ENCODE measurements at regions of chr9 and their contacts with region 1.

Region 1: GRCh38 chr9:19230356-19231125 is at the start of gene DENND4C:
- H3K4me3 ChIP-seq: peak within 1 kb of the TSS; percentile 92
- H3K27ac ChIP-seq: peak within 1 kb of the TSS; percentile 96
- H3K4me1 ChIP-seq: peaks cover 9% of the 10 kb centered on the region; the same call in 1 of the 2 replicates
- CTCF ChIP-seq: no peak

Region 2: DNA sequence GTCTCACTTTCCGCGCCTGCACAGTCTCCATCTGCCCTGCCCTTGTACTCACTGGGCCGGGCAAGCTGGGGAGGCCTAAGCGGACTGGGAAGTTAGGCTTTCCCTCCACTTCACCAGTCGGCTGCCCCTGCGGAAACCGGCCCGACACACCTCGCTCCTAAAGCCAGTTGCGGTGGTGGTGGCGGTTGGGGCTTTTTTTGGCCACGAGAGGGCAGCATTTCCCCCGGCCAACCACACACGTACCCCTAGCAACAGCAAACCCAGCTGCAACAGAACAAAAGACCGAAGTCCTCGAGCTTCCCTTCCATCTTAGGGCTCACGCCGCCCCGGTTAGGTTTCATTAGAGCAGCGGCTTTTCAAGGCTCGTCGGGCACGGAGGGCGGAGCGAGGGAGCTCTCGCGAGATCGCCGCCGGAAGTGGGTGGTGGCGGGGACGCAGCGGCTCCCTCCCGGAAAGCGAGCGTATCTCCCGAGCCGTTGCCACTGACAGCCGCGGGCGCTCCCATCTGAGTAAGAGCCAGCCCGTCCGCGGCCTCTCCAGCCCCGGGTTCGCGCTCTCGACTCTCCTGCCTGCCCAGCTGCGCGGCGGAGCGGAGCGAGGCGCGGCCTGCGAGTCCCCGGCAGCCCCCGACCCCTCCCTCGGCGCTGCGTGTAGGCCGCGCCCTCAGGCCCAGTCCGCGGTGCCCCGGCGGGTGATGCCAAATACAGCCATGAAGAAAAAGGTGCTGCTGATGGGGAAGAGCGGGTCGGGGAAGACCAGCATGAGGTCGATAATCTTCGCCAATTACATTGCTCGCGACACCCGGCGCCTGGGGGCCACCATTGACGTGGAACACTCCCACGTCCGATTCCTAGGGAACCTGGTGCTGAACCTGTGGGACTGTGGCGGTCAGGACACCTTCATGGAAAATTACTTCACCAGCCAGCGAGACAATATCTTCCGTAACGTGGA is 181.3 kb before region 1 on chr9 and contains the start of gene RRAGA:
- CTCF ChIA-PET with region 1: no interaction called
- POLR2A ChIA-PET with region 1: interaction called, 11 read pairs
- H3K4me3 ChIP-seq: peak within 1 kb of the TSS; percentile 75
- H3K27ac ChIP-seq: peak within 1 kb of the TSS; percentile 92
- H3K4me1 ChIP-seq: no peaks in the 10 kb centered on the region
- CTCF ChIP-seq: peak; percentile 95

Region 3: GRCh38 chr9:19102631-19103345 is 127.8 kb before region 1 on chr9 and contains the start of gene HAUS6:
- CTCF ChIA-PET with region 1: no interaction called
- POLR2A ChIA-PET with region 1: interaction called, 10 read pairs
- H3K4me3 ChIP-seq: peak within 1 kb of the TSS; percentile 71
- H3K27ac ChIP-seq: peak within 1 kb of the TSS; percentile 70
- H3K4me1 ChIP-seq: peaks cover 2% of the 10 kb centered on the region; the same call in 1 of the 2 replicates
- CTCF ChIP-seq: peak; percentile 50

Region 4: GRCh38 chr9:19201899-19202891 is 28.3 kb before region 1 on chr9:
- CTCF ChIA-PET with region 1: no interaction called
- POLR2A ChIA-PET with region 1: interaction called, 14 read pairs
- H3K4me3 ChIP-seq: no peak overlapping the region
- H3K27ac ChIP-seq: peak overlapping the region; percentile 84
- H3K4me1 ChIP-seq: peaks cover 10% of the 10 kb centered on the region; the same call in 1 of the 2 replicates
- CTCF ChIP-seq: no peak

Region 5: GRCh38 chr9:19241506-19242127 is 11.1 kb after region 1 on chr9:
- CTCF ChIA-PET with region 1: interaction called, 3 read pairs
- POLR2A ChIA-PET with region 1: interaction called, 11 read pairs
- H3K4me3 ChIP-seq: no peak overlapping the region
- H3K27ac ChIP-seq: no peak overlapping the region
- H3K4me1 ChIP-seq: peaks cover 6% of the 10 kb centered on the region
- CTCF ChIP-seq: no peak

Region 6: DNA sequence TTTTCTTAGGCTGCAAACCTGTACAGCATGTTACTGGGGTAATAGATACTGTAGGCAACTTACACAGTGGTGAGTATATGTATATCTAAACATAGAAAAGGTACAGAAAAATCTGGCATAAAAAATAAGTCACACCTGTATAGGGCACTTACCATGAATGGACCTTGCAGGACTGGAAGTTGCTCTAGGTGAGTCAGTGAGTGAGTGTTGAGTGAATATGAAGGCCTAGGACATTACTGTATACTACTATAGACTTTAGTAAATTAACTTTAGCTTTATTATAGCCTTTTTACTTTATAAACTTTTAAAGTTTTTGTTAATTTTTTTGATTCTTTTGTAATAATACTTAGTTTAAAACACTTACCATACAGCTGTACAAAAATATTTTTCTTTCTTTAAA is 51.3 kb after region 1 on chr9:
- CTCF ChIA-PET with region 1: no interaction called
- POLR2A ChIA-PET with region 1: no interaction called
- H3K4me3 ChIP-seq: no peak overlapping the region
- H3K27ac ChIP-seq: no peak overlapping the region
- H3K4me1 ChIP-seq: peaks cover 17% of the 10 kb centered on the region
- CTCF ChIP-seq: no peak

Measured in HEK293 (cell line).